ENCODE measurements at regions of chr1 and their contacts with region 1.

Region 1: DNA sequence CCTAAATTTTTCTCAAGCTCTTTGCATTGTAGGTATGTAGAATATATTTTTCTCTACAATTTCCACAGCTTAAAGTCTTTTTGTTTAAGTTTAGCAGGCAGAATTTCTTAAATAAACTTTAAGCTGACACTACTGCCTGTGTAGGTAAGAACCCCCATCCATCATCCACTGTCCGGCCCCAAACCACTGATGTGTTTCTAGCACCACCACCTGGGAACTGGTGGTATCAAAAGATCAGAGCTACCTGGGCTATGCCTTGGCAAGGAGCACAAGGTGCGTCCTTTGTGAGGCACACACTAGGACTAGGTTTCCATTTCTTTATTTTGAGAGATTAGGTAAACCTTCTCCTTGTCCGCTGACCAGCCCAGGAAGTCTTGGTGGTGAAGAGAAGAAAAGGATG is 10.5 kb upstream of the LELP1 start:
- DNase-seq: peak; percentile 77
- H3K4me3 Mint-ChIP-seq: no peak overlapping the region
- H3K27ac Mint-ChIP-seq: no peak overlapping the region
- H3K4me1 Mint-ChIP-seq: peaks cover 8% of the 10 kb centered on the region
- H3K27me3 Mint-ChIP-seq: peaks cover 27% of the 10 kb centered on the region
- CTCF ChIP-seq: peak; percentile 98

Region 2: GRCh38 chr1:152884966-152885624 is 307.6 kb before region 1 on chr1:
- CTCF ChIA-PET with region 1: interaction called, 479 read pairs
- POLR2A ChIA-PET with region 1: interaction called, 3 read pairs
- intact Hi-C with region 1: no loop called
- DNase-seq: peak; percentile 90
- H3K4me3 Mint-ChIP-seq: no peak overlapping the region
- H3K27ac Mint-ChIP-seq: peak overlapping the region; percentile 25
- H3K4me1 Mint-ChIP-seq: peaks cover 60% of the 10 kb centered on the region
- H3K27me3 Mint-ChIP-seq: no peaks in the 10 kb centered on the region
- CTCF ChIP-seq: no peak

Region 3: DNA sequence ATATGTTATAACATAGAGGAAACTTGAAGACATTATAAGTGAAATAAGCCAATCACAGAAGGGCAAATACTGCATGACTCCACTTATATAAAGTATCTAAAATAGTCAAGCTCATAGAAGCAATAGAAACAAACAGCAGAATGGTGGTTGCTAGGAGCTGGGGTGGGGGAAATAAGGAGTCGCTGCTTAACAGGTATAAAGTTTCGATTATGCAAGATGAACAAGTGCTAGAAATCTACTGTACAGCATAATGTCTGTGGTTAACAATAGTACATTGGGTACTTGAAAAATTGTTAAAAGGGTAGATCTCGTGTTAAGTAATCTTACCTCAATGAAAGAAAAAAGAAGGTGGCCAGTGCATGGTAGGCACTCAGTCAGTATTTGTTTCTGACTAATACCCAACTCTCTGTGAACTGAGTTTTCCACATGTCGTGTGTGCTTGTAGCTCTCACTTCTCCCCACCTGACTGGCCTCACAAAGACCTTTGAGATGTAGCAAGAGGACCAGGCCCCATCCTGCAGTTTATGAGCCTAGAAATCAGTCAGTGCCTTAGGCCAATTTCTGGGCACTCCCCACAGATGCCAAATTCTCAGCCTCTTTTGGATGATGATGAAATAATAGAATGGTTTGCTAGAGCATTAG is 260.4 kb before region 1 on chr1:
- CTCF ChIA-PET with region 1: interaction called, 99 read pairs
- POLR2A ChIA-PET with region 1: interaction called, 3 read pairs
- intact Hi-C with region 1: no loop called
- DNase-seq: peak; percentile 89
- H3K4me3 Mint-ChIP-seq: no peak overlapping the region
- H3K27ac Mint-ChIP-seq: peak overlapping the region; percentile 14
- H3K4me1 Mint-ChIP-seq: peaks cover 25% of the 10 kb centered on the region
- H3K27me3 Mint-ChIP-seq: no peaks in the 10 kb centered on the region
- CTCF ChIP-seq: no peak

Region 4: GRCh38 chr1:153032677-153033308 is 159.9 kb before region 1 on chr1:
- CTCF ChIA-PET with region 1: interaction called, 67 read pairs
- POLR2A ChIA-PET with region 1: interaction called, 7 read pairs
- intact Hi-C with region 1: loop called (anchors 1 kb)
- DNase-seq: peak; percentile 97
- H3K4me3 Mint-ChIP-seq: no peak overlapping the region
- H3K27ac Mint-ChIP-seq: peak overlapping the region; percentile 25
- H3K4me1 Mint-ChIP-seq: peaks cover 12% of the 10 kb centered on the region
- H3K27me3 Mint-ChIP-seq: no peaks in the 10 kb centered on the region
- CTCF ChIP-seq: peak; percentile 68

Region 5: GRCh38 chr1:153180556-153180955 is 12.1 kb before region 1 on chr1:
- CTCF ChIA-PET with region 1: interaction called, 11 read pairs
- POLR2A ChIA-PET with region 1: no interaction called
- intact Hi-C with region 1: no loop called
- DNase-seq: no peak
- H3K4me3 Mint-ChIP-seq: no peak overlapping the region
- H3K27ac Mint-ChIP-seq: no peak overlapping the region
- H3K4me1 Mint-ChIP-seq: no peaks in the 10 kb centered on the region
- H3K27me3 Mint-ChIP-seq: no peaks in the 10 kb centered on the region
- CTCF ChIP-seq: peak; percentile 13

Region 6: DNA sequence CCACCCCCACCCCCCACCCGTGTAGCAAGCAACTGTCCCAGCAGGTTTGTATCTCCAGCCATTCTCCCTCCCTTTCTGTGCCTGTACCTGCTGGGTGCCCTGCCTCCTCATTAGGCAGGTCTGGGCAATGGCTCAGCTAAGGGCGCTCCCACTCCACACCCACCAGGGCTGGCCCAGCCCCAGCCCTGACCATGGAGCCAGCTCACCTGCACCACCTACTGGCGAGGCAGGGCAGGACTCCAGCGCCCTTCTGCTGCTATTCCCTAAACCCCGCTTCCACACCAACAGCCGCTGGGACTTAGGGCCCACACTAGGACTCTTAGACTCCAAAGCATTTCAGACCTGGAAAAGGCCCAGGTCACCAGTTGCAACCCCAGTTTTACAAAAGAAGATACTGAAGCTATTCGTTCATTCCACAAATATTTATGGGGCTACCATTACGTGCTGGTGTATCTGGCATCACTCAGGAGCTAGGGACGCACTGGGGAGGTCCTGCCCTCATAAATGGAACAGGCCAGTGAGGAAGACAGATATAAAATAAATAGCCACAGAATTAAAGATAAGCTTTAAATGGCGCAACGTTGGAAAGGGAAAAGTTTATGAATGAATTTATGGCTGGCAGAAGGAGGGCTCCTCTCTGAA is 96.1 kb after region 1 on chr1:
- CTCF ChIA-PET with region 1: interaction called, 12 read pairs
- POLR2A ChIA-PET with region 1: no interaction called
- intact Hi-C with region 1: no loop called
- DNase-seq: peak; percentile 86
- H3K4me3 Mint-ChIP-seq: no peak overlapping the region
- H3K27ac Mint-ChIP-seq: no peak overlapping the region
- H3K4me1 Mint-ChIP-seq: no peaks in the 10 kb centered on the region
- H3K27me3 Mint-ChIP-seq: peaks cover 13% of the 10 kb centered on the region
- CTCF ChIP-seq: peak; percentile 69